BJ (cell line): ENCODE measurements at regions of chr22 and their contacts with region 1.

Region 1: GRCh38 chr22:18077639-18078328 is at the start of gene PEX26:
- DNase-seq: peak; percentile 70
- H3K4me3 ChIP-seq: peak within 1 kb of the TSS; percentile 97
- H3K27me3 ChIP-seq: no peaks in the 10 kb centered on the region
- CTCF ChIP-seq: no peak
- polyA plus RNA-seq, gene PEX26: 21.1 and 30.6 TPM in 2 replicates

Region 2: DNA sequence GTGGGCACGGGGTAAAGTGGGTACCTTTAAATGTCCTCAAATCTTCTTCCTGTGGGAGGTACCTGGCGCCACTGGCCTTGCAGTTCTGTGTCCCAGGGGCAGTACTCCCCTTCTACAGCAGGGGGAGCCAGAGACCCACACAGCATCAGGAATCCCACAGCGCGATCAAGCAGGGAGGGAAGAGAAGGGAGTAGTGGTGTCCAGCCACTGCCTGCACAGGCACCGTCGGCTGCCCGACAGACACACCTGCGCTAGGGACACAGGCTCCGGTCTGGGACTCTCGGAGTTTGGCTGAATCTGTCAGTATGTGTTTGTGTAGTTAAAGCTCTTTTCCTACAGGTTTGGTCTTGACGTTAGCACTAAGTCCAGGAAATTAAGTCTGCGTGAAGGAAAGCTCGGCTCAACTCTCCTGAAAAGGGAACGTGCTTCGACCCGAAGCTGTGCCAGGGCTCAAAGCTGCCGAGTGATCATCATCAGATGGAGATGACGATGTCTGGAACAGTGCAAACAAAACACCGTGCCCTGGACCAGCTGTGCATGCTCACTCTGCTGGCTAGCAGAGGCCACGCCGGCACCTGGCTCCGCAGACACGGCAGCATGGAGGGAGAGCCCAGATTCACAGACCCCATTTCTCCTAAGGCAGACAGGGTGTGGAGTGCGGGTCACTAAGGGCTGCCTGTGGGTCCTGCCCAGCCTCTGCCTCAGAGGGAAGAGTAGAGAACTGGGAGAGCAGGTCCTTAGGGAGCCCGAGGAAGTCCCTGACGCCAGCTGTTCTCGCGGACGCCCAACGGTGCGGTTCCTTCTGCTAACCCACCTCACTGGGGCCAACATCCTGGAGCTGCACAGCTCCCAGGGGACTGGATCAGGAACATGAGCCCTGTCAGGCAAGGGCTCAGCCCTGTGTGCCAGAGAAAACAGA is 247.5 kb before region 1 on chr22:
- CTCF ChIA-PET with region 1: interaction called, 172 read pairs
- POLR2A ChIA-PET with region 1: no interaction called
- DNase-seq: no peak
- H3K4me3 ChIP-seq: no peak overlapping the region
- H3K27me3 ChIP-seq: no peaks in the 10 kb centered on the region
- CTCF ChIP-seq: peak; percentile 99

Region 3: GRCh38 chr22:18001040-18001893 is 76.5 kb before region 1 on chr22:
- CTCF ChIA-PET with region 1: interaction called, 42 read pairs
- POLR2A ChIA-PET with region 1: no interaction called
- DNase-seq: peak; percentile 86
- H3K4me3 ChIP-seq: peak overlapping the region; percentile 64
- H3K27me3 ChIP-seq: no peaks in the 10 kb centered on the region
- CTCF ChIP-seq: peak; percentile 43

Region 4: DNA sequence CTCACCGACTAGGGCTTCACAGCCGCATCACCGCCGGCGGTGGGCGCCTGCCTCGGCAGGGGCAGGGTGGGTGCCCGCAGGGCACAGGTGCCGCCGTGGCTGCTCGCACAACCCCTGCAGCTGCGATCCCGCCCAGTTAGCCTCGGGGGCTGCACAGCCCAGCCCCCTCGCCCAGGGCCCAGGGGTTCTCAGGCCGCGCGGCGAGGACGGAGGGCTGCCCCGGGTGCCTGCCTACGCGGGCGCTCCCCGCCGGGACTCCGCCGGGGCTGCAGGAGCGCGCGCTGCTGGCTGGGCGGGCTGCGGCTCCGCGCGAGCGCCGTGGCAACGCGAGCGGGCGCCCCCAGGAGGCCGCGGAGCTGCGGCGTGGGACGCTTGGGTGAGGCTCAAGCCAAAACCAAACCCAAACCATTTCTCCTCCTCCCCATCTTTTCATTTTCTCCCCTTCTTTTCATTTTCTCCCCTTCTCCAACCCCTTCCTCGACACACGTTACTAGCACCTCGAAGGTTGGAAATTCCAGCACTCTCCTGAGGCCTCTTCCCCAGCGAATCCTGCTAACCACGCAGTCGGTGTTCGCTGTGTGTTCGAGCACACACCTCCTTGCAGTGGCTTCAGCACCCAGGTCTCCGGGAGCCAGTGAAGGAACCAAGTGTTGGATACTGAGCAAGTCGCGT is 53.4 kb before region 1 on chr22 and contains the start of gene MICAL3:
- CTCF ChIA-PET with region 1: interaction called, 19 read pairs
- POLR2A ChIA-PET with region 1: no interaction called
- DNase-seq: no peak
- H3K4me3 ChIP-seq: peak within 1 kb of the TSS; percentile 67
- H3K27me3 ChIP-seq: no peaks in the 10 kb centered on the region
- CTCF ChIP-seq: peak; percentile 61
- polyA plus RNA-seq, gene MICAL3: 13.4 and 16.4 TPM in 2 replicates

Region 5: DNA sequence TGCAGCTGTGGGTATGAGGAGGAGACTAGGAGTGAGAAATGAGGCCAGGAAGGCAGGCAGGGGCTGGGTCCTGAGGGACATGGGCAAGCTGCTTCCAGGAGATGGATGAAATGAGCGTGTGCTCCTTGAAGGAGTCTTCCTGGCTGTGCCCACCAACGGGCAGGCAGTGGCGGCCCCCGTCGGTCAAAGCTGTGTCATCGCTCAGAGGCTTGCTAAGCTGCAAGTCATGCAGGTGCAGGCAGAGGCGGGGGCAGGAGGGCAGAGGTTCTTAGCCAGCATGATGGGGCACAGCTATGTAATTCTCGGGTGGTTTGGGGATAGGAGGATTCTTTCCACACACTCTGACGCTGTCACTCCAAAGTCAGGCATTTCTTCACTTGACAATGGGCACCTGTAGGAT is 12.5 kb before region 1 on chr22:
- CTCF ChIA-PET with region 1: interaction called, 17 read pairs
- POLR2A ChIA-PET with region 1: no interaction called
- DNase-seq: no peak
- H3K4me3 ChIP-seq: no peak overlapping the region
- H3K27me3 ChIP-seq: no peaks in the 10 kb centered on the region
- CTCF ChIP-seq: no peak